GM10248 (cell line): ENCODE measurements at regions of chr1 and their contacts with region 1.

Region 1: DNA sequence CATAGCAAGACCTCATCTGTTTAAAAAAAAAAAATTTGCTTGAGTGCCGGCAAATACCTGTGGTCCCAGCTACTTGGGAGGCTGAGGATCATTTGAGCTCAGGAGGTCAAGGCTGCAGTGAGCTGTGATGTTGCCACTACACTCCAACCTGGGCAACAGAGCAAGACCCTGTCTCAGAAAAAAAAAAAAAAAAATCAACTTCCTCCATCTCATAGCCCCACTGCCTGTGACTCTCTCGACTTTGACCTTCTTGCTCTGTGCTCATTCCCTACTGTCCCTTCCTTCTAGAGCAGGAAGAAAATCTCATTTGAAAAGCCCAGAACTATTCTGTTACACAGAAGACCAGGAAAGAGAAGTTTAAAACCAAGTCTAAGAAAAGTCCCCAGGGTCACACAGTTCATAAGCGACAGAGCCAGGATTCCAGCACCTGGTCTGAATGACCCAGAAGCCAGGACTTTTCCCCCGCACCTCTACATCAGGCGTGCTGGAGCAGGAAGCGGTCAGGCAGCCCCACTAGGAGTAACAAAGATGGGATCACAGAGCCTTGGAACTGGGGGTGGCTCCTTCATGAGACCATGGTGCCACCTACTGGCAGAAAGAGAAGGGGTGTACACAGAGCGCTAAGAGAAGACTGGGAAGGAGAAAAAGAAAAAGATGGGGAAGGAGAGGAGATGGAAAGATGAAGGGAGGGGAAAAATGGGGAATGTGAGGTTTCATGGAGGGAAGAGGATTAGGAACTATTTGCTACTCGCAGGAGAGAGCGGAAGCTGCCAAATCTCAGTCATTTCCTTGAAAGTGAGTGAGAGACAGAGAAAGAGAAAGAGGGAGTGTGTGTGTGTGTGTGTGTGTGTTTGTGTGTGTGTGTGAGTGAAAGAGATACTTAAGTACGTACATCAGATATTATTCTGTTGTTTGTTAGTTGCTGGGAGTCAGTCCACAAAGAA is 3.1 kb upstream of the P3R3URF start:
- DNase-seq: peak; percentile 78
- CTCF ChIP-seq: peak; percentile 85

Region 2: DNA sequence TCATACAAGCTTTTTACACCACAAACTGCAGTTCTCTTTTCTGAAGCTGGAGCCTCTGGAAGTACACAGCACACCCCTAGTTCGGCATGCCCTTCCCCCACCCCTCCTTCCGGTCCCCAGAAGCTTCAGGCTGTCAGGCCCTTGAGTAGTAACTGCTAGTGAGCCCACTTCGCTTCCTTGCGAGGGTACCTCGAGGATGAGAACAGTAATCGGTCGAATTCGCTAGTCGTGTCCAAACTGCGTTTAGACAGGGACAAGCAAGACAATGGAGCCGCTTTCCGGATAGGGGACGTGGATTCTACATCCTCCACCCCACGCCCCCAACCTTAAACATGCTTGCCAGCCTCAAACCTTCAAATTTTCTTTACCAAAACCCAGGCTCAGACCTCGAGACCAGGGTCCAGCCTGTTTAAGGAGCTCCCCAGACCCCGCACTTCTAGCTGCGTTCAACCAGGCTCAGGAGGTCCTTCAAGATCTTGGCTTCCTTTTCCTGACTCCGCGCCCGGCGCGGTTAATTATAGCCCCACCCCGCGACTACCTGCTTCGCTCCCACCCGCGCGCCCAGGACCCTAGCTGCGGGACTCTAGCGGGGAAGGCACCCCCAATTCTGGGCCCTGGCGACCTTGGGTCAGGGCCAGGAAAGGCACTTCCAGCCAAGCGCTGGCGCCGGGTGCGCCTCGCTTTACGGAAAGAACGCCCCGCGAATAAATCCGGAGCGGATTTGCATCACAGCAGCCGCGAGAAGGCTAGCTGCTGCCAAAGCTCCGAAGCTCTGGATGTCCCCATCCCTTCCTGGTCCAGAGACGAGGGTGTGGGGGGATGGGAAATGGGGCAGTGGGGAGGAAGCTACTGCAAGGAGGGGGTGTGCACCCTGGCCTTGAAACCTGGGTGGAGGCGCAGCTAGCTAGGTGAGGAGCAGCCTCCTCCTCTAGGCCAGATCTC is 12.6 kb before region 1 on chr1:
- CTCF ChIA-PET with region 1: interaction called, 29 read pairs
- POLR2A ChIA-PET with region 1: no interaction called
- DNase-seq: peak; percentile 50
- CTCF ChIP-seq: no peak

Region 3: DNA sequence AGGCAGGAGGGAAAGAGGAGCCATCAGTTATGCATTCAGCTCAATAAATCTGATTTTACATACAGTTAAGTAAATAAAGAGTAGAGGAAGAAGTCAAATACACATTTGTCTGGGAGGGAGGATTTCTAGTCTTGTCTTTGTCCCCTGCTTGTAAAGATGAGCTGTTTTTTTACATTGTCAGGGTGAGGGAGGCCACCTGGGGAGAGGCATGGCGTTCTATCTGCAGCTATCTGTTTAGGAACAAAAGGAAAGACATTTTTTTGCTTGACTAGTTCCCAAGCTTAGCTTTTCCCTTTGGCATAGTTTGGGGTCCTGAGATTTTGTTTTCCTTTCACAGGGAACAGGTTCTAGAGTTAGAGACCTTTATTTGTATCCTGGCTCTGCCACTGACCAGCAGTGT is 83.1 kb after region 1 on chr1:
- CTCF ChIA-PET with region 1: no interaction called
- POLR2A ChIA-PET with region 1: no interaction called
- DNase-seq: no peak
- CTCF ChIP-seq: no peak